GM13976 (cell line): ENCODE measurements at regions of chr16 and their contacts with region 1.

Region 1: GRCh38 chr16:67150833-67151396 is at the start of gene B3GNT9:
- DNase-seq: peak; percentile 84
- CTCF ChIP-seq: no peak

Region 2: DNA sequence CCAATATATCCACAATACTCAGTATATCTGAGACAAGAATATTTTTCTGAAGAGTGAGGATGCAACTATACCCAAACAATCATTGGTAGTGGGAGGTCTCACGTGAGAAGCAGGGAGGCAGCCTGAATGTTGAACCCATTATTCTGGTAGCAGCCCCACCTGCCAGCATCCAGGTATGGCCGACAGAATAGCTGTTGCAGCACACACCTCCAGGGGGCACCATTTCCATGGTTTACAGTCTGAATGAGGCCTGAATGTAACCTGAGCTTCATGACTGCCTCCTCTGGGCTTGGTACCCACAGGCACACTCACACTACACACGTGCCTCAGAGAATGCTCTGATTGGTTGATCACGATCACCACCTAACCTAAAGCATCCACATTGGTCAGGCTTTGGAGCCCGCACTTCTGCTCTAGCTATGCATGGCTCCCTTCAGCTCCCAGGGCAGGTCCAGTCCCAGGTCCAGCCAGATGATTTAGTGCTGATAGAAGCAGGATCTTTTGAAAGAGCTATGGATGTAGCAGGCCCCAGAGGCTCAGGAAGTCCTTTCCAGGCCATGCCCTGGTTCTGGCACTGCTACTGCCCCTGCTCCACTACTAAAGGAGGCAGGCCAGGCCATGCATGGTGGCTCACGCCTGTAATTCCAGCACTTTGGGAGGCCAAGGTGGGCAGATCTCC is 133.0 kb before region 1 on chr16:
- in situ Hi-C with region 1: loop called (anchors 5 kb)
- DNase-seq: peak; percentile 86
- CTCF ChIP-seq: peak; percentile 91